ENCODE measurements at regions of chr9 and their contacts with region 1.

Region 1: DNA sequence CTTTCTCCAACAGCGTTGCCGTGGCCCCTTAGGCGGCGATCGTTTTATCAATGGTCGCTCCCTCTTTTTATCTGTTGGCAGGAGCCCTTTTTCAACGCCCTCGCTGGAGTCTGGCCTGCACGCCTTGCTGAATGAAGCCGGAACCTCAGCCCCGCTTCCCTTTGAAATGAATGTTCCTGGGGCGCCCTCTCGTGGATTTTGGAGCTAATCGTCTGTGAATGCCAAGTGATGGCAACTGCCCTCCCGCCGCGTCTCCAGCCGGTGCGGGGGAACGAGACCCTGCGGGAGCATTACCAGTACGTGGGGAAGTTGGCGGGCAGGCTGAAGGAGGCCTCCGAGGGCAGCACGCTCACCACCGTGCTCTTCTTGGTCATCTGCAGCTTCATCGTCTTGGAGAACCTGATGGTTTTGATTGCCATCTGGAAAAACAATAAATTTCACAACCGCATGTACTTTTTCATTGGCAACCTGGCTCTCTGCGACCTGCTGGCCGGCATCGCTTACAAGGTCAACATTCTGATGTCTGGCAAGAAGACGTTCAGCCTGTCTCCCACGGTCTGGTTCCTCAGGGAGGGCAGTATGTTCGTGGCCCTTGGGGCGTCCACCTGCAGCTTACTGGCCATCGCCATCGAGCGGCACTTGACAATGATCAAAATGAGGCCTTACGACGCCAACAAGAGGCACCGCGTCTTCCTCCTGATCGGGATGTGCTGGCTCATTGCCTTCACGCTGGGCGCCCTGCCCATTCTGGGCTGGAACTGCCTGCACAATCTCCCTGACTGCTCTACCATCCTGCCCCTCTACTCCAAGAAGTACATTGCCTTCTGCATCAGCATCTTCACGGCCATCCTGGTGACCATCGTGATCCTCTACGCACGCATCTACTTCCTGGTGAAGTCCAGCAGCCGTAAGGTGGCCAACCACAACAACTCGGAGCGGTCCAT is 10.0 kb downstream of the S1PR3 start:
- DNase-seq: peak; percentile 91
- H3K4me3 Mint-ChIP-seq: peak overlapping the region; percentile 48
- H3K27ac Mint-ChIP-seq: no peak overlapping the region
- H3K4me1 Mint-ChIP-seq: peaks cover 10% of the 10 kb centered on the region
- H3K27me3 Mint-ChIP-seq: no peaks in the 10 kb centered on the region
- CTCF ChIP-seq: peak; percentile 84

Region 2: GRCh38 chr9:88173378-88173999 is 827.8 kb before region 1 on chr9:
- CTCF ChIA-PET with region 1: no interaction called
- POLR2A ChIA-PET with region 1: no interaction called
- intact Hi-C with region 1: loop called (anchors 1 kb)
- DNase-seq: peak; percentile 87
- H3K4me3 Mint-ChIP-seq: no peak overlapping the region
- H3K27ac Mint-ChIP-seq: no peak overlapping the region
- H3K4me1 Mint-ChIP-seq: peaks cover 5% of the 10 kb centered on the region
- H3K27me3 Mint-ChIP-seq: peaks cover 33% of the 10 kb centered on the region
- CTCF ChIP-seq: peak; percentile 85

Region 3: GRCh38 chr9:88660611-88661010 is 340.6 kb before region 1 on chr9:
- CTCF ChIA-PET with region 1: interaction called, 5 read pairs
- POLR2A ChIA-PET with region 1: no interaction called
- intact Hi-C with region 1: loop called (anchors 1 kb)
- DNase-seq: peak; percentile 65
- H3K4me3 Mint-ChIP-seq: no peak overlapping the region
- H3K27ac Mint-ChIP-seq: no peak overlapping the region
- H3K4me1 Mint-ChIP-seq: peaks cover 10% of the 10 kb centered on the region
- H3K27me3 Mint-ChIP-seq: no peaks in the 10 kb centered on the region
- CTCF ChIP-seq: peak; percentile 45

Region 4: DNA sequence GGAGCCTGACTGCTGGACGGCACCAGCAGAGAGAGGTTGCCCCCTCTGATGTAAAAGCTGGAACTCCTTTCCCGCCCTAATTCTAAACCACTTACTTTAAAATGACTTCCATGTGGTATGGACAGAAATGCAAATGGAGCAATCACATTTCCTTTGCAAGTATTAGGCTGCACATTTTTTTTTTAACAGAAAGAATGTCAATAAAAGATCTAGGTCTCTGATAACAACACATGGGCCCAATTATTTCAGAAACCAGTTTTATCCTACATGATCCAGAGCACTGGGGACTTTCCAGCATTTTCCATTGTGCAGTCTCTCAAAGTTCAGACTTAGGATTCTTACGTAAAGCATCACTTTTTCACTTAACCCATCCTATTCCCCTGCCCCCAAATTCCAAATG is 262.5 kb before region 1 on chr9:
- CTCF ChIA-PET with region 1: no interaction called
- POLR2A ChIA-PET with region 1: no interaction called
- intact Hi-C with region 1: loop called (anchors 5 kb)
- DNase-seq: no peak
- H3K4me3 Mint-ChIP-seq: no peak overlapping the region
- H3K27ac Mint-ChIP-seq: no peak overlapping the region
- H3K4me1 Mint-ChIP-seq: peaks cover 21% of the 10 kb centered on the region
- H3K27me3 Mint-ChIP-seq: no peaks in the 10 kb centered on the region
- CTCF ChIP-seq: no peak

Region 5: DNA sequence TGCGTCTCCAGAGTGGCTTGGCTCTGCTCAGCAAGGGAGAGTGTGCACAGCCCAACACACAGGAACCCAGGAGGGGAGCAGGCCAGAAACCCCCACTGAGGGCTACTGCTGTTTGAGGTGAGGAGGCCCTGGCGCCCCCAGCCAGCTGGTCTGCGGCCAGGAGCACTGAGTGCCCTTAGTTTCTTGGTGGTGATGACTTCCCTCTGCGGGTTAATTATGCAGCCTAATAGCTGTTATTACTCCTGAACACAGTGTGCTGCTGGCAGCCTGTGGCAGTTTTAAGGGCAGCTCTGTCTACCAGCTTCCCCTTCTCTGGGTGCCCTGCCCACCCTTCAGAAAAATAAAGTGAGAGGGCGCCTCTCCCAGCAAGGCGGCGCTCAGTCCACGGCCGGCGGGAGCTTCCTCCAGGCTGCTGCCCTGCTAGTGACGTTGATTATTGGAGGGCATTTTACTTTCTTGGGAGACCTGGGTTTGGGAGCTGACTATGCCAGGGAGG is 622.7 kb after region 1 on chr9:
- CTCF ChIA-PET with region 1: no interaction called
- POLR2A ChIA-PET with region 1: no interaction called
- intact Hi-C with region 1: no loop called
- DNase-seq: no peak
- H3K4me3 Mint-ChIP-seq: no peak overlapping the region
- H3K27ac Mint-ChIP-seq: no peak overlapping the region
- H3K4me1 Mint-ChIP-seq: no peaks in the 10 kb centered on the region
- H3K27me3 Mint-ChIP-seq: peaks cover 24% of the 10 kb centered on the region
- CTCF ChIP-seq: no peak